Naive thymus-derived CD8-positive, alpha-beta T cell (primary cell): ENCODE measurements at regions of chr6 and their contacts with region 1.

Region 1: DNA sequence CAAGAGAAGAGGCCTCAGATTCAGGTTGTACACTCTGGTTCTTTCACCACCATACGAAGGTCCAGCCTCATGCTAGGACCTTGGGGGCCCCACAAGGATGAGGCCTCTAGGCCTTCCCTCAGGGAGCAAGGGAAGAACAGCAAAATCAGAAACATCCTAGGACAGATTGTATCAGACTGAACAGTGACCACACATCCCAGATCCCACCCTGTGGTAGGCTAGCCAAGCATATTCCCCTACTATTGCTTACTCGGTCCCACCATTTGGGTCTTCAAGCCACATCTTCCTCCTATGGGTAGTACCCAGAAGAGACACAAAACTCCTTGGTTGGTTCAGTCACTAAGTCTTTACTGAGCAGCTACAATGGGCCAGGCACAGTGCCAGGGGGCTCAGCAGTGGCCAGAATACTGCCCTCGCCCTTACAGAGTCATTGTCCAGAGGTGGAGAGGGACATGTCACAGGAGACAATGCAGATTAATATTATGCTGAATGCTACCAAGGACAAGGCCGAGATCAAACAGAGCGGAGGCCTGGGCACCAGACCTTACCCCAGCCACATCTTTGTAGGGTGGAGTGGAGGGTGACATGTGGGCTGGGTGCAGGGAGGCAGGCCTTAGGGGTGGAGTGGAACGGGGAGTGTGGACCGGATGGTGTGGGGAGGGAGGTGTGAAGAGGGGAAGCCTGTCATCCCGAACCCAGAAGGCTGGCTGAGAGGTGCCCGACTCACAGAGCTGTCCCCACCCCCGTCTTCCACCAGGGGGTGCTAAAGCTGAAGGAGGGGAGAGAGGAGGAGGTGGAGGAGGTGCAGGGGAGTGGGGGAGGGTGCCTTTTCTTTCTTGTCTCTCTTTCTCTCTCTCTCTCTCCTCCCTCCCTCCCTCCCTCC is 6.8 kb upstream of the MAPK13 start:
- DNase-seq: peak; percentile 72 to 94 (median 88)
- ATAC-seq: peak; percentile 69 to 79
- H3K4me3 Mint-ChIP-seq: peak overlapping the region in 9 of 10 donors; percentile 47 to 75 (median 62)
- H3K27ac Mint-ChIP-seq: peak overlapping the region; percentile 97 to 99 (median 98)
- H3K4me1 Mint-ChIP-seq: peaks cover 41 to 97% (median 91%) of the 10 kb centered on the region in 4 donors
- H3K27me3 Mint-ChIP-seq: no peaks in the 10 kb centered on the region

Region 2: DNA sequence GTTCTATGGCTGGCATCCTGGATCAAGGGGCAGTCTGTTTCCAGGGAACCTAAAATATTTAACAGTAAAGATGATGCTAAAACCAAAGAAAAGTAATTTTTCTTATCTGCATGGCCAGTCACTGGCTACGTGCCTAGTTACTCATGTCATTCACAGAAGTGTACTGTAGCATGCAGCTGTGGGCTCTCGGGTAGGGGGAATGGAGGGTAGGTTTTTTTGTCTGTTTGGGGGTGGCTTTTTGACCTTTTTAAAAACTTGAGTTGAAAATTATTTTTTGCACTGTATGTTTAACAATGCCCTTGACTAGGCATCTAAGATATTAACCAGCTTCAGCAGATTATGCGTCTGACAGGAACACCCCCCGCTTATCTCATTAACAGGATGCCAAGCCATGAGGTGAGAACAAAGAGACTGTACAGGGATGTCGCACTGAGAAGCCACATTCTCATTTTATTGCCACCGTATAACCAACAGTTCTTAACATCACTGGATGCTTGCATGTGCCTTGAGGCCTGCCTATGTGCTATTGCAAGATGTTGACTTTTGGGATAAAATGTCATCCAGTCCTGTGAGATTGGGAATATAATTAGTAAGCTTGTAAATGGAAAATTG is 23.5 kb before region 1 on chr6:
- POLR2A ChIA-PET with region 1: interaction called, 30 read pairs
- DNase-seq: peak in 7 of 10 donors; percentile 22 to 79 (median 73)
- ATAC-seq: peak; percentile 87 to 96
- H3K4me3 Mint-ChIP-seq: peak overlapping the region; percentile 31 to 83 (median 74)
- H3K27ac Mint-ChIP-seq: peak overlapping the region; percentile 67 to 96 (median 93)
- H3K4me1 Mint-ChIP-seq: peaks cover 22 to 70% (median 55%) of the 10 kb centered on the region in 4 donors
- H3K27me3 Mint-ChIP-seq: no peaks in the 10 kb centered on the region

Region 3: DNA sequence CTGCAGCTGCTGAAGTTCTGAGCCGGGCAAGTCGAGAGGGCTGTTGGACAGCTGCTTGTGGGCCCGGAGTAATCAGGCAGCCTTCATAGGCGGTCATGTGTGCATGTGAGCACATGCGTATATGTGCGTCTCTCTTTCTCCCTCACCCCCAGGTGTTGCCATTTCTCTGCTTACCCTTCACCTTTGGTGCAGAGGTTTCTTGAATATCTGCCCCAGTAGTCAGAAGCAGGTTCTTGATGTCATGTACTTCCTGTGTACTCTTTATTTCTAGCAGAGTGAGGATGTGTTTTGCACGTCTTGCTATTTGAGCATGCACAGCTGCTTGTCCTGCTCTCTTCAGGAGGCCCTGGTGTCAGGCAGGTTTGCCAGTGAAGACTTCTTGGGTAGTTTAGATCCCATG is 14.4 kb before region 1 on chr6:
- POLR2A ChIA-PET with region 1: interaction called, 83 read pairs
- DNase-seq: peak in 8 of 10 donors; percentile 43 to 87 (median 67)
- ATAC-seq: peak; percentile 94 to 96
- H3K4me3 Mint-ChIP-seq: peak overlapping the region; percentile 19 to 80 (median 50)
- H3K27ac Mint-ChIP-seq: peak overlapping the region; percentile 91 to 98 (median 96)
- H3K4me1 Mint-ChIP-seq: peaks cover 21 to 73% (median 52%) of the 10 kb centered on the region in 4 donors
- H3K27me3 Mint-ChIP-seq: no peaks in the 10 kb centered on the region

Region 4: GRCh38 chr6:37602346-37602745 is 1478.8 kb after region 1 on chr6:
- POLR2A ChIA-PET with region 1: no interaction called
- DNase-seq: no peak
- ATAC-seq: no peak
- H3K4me3 Mint-ChIP-seq: no peak overlapping the region
- H3K27ac Mint-ChIP-seq: no peak overlapping the region
- H3K4me1 Mint-ChIP-seq: no peaks in the 10 kb centered on the region
- H3K27me3 Mint-ChIP-seq: peaks cover 0 to 5% (median 0%) of the 10 kb centered on the region in 5 donors